ENCODE measurements at regions of chr14 and their contacts with region 1.

Region 1: GRCh38 chr14:32457213-32457920 is 128.3 kb downstream of the AKAP6 start:
- DNase-seq: no peak
- H3K4me3 ChIP-seq: no peak overlapping the region
- H3K27ac ChIP-seq: no peak overlapping the region
- H3K4me1 ChIP-seq: no peaks in the 10 kb centered on the region
- H3K27me3 ChIP-seq: peaks cover 8% of the 10 kb centered on the region
- CTCF ChIP-seq: no peak

Region 2: DNA sequence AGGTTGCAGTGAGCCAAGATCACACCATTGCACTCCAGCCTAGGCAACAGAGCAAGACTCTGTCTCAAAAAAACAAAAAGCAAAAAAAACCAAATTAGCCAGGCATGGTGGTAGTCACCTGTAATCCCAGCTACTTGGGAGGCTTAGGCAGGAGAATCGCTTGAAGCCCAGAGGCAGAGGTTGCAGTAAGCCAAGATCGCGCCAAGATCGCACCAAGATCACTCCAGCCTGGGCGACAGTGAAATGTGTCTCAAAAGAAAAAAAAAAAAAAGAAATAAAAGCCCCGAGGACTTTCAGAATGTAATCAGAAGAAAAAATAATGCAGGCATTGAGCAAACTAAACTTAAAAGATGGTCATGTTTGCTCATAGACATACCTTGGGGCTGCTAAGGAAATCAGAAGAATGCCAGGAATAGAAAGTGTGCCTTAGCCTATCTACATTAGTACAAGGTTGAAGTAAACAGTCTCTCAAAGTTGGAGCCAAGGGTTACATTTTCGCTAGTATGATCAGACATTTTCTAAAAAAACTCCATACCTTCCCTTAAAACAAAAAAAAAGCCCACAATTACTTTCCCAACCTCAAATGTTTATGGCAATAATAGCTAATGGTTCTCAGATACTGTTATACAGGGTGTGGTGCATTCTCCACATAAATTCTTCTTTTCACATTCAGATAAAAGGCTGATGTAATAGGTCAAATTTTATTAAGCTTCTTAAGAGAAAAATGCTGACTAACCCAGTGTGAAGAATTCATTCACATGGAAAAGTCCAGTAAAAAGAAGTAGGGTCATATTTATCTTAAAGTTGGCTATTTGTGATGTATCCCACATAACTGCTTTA is 1015.9 kb before region 1 on chr14:
- CTCF ChIA-PET with region 1: no interaction called
- POLR2A ChIA-PET with region 1: no interaction called
- intact Hi-C with region 1: loop called (anchors 5 kb)
- DNase-seq: peak; percentile 41
- H3K4me3 ChIP-seq: no peak overlapping the region
- H3K27ac ChIP-seq: no peak overlapping the region
- H3K4me1 ChIP-seq: no peaks in the 10 kb centered on the region
- H3K27me3 ChIP-seq: no peaks in the 10 kb centered on the region
- CTCF ChIP-seq: no peak